ENCODE measurements at regions of chr5 and their contacts with region 1.

Region 1: DNA sequence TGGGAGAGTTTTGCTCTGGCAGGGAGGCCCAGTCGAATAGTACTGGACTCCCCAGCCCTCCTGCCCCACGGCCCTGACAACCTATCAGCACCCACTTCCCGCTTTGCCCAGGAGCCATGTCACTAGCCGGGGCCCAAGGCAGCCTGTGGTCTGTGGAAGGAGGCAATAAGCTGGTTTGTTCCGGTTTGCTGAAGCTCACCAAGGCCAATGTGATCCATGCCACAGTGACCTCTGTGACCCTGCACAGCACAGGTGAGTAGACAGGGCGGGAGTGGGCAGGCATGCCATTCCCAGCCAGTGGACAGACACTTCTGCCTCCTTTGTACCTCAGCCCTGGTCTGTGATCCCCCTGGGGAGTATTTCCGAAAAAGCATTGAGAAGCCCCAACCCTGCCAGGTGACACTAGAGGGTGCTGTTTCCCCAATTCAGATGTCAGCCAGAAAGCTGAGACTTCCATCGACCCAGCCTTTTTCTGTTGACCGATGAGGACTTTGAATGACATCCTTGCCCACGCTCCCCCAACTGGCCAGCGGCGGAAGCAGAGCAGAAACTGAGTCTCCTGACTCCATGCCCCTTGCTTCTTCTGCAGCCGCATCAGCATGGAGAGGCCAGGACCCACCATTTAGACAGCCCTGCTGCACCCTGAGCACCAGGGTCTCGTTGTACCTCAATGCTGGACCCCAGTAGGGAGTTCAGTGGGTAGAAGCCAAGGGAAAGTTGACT is 9.6 kb downstream of the PCYOX1L start:
- DNase-seq: peak; percentile 68
- H3K4me3 ChIP-seq: no peak overlapping the region
- H3K27ac ChIP-seq: peak overlapping the region in 3 of 4 donors; percentile 21 to 63 (median 30)
- H3K4me1 ChIP-seq: peaks cover 0 to 12% (median 7%) of the 10 kb centered on the region in 4 donors
- H3K27me3 ChIP-seq: no peaks in the 10 kb centered on the region
- CTCF ChIP-seq: peak; percentile 70 to 80 (median 76)
- EP300 ChIP-seq: no peak
- POLR2A ChIP-seq: no peak

Region 2: DNA sequence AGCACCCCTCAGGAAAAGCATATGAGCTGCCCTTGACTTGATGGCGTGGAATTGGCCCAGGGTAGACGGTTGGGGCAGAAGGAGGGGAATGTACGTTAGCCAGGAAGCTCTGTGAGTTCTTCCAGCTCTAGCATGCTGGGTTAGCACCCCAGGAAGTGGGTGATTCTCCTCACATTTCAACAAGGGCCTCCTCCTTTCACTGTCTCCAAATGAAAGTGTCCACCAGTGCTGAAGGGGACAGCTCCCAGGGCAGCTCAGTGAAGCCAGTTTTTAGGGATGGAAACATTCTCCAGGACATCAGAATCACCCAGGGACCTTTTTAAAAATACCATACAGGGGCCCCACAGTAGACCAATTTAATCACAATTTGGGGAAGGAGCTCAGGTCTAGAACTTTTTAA is 112.9 kb before region 1 on chr5:
- in situ Hi-C with region 1: no loop called
- intact Hi-C with region 1: no loop called
- DNase-seq: no peak
- H3K4me3 ChIP-seq: no peak overlapping the region
- H3K27ac ChIP-seq: no peak overlapping the region
- H3K4me1 ChIP-seq: no peaks in the 10 kb centered on the region
- H3K27me3 ChIP-seq: no peaks in the 10 kb centered on the region
- CTCF ChIP-seq: no peak
- EP300 ChIP-seq: no peak
- POLR2A ChIP-seq: no peak

Region 3: GRCh38 chr5:149317281-149318048 is 49.9 kb before region 1 on chr5:
- in situ Hi-C with region 1: loop called in 2 of 4 experiments (anchors 5 to 10 kb)
- intact Hi-C with region 1: no loop called
- DNase-seq: peak; percentile 27
- H3K4me3 ChIP-seq: no peak overlapping the region
- H3K27ac ChIP-seq: peak overlapping the region in 1 of 4 donors; percentile 31
- H3K4me1 ChIP-seq: peaks cover 13 to 26% (median 19%) of the 10 kb centered on the region in 4 donors
- H3K27me3 ChIP-seq: no peaks in the 10 kb centered on the region
- CTCF ChIP-seq: peak; percentile 64 to 86 (median 71)
- EP300 ChIP-seq: no peak
- POLR2A ChIP-seq: no peak

Region 4: DNA sequence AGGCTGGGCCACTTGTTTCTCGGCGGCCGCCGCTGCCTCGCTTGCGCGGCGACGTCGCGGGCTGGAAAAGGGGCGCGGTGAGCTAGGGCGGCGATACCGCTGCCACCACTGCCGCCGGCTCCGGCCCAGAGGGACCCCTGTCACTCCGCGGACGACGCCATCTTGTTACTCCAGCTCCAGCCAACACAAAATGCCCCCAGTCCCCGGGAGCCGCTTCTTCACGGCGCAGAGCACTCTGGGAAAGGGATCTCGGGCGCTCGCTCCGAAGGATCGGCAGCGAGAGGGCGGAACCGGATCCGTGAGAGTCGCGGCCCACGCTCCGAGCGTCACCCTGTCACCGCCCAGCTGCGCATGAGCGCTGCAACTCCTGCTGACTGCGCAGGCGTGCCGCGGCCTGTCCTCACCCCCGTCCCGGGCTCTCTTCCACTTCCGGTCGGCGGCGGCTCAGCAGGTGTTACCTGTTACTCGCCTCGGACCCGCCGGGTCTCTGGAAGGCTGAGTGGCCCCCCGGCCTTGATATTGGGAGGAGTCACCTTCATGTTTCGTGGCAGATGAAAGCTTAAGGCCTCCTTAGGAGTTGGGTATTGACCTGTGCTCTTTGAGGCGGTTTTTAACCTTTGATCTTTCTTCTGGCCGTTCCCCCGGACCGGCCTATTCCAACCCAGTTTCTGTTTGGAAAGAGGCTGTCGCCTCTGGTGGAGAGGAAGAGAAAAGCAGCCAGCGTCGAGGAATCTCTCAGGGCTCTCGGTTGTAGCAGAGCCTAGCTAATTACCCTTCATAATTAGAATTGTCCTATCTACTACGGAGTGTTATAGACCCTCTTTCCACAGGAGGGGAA is 184.0 kb after region 1 on chr5 and contains the start of gene CSNK1A1:
- in situ Hi-C with region 1: loop called in 1 of 4 experiments (anchors 10 kb)
- intact Hi-C with region 1: no loop called
- DNase-seq: peak; percentile 99
- H3K4me3 ChIP-seq: peak within 1 kb of the TSS; percentile 75 to 84 (median 80)
- H3K27ac ChIP-seq: peak within 1 kb of the TSS; percentile 98 to 99 (median 98)
- H3K4me1 ChIP-seq: peaks cover 24 to 39% (median 29%) of the 10 kb centered on the region in 4 donors
- H3K27me3 ChIP-seq: no peaks in the 10 kb centered on the region
- CTCF ChIP-seq: peak; percentile 77 to 98 (median 85)
- EP300 ChIP-seq: no peak
- POLR2A ChIP-seq: peak; percentile 97
- total RNA-seq, gene CSNK1A1: 159 to 260 (median 184) TPM

Region 5: GRCh38 chr5:149561848-149562247 is 194.4 kb after region 1 on chr5:
- in situ Hi-C with region 1: loop called in 1 of 4 experiments (anchors 10 kb)
- intact Hi-C with region 1: loop called (anchors 10 kb)
- DNase-seq: no peak
- H3K4me3 ChIP-seq: no peak overlapping the region
- H3K27ac ChIP-seq: peak overlapping the region; percentile 79 to 87 (median 85)
- H3K4me1 ChIP-seq: peaks cover 12 to 31% (median 20%) of the 10 kb centered on the region in 4 donors
- H3K27me3 ChIP-seq: no peaks in the 10 kb centered on the region
- CTCF ChIP-seq: no peak
- EP300 ChIP-seq: no peak
- POLR2A ChIP-seq: no peak